MCF 10A (cell line): ENCODE measurements at regions of chr13 and their contacts with region 1.

Region 1: GRCh38 chr13:104571161-104571892 is 1505.1 kb upstream of the SLC10A2 start:
- DNase-seq: peak; percentile 80
- H3K4me3 Mint-ChIP-seq: peak overlapping the region; percentile 62
- H3K27ac Mint-ChIP-seq: peak overlapping the region; percentile 28
- H3K4me1 Mint-ChIP-seq: peaks cover 11% of the 10 kb centered on the region
- H3K27me3 Mint-ChIP-seq: no peaks in the 10 kb centered on the region
- CTCF ChIP-seq: peak; percentile 74

Region 2: GRCh38 chr13:103883164-103883563 is 688.2 kb before region 1 on chr13:
- CTCF ChIA-PET with region 1: interaction called, 7 read pairs
- POLR2A ChIA-PET with region 1: no interaction called
- intact Hi-C with region 1: loop called (anchors 2 kb)
- DNase-seq: peak; percentile 95
- H3K4me3 Mint-ChIP-seq: peak overlapping the region; percentile 57
- H3K27ac Mint-ChIP-seq: no peak overlapping the region
- H3K4me1 Mint-ChIP-seq: peaks cover 5% of the 10 kb centered on the region
- H3K27me3 Mint-ChIP-seq: no peaks in the 10 kb centered on the region
- CTCF ChIP-seq: peak; percentile 60

Region 3: DNA sequence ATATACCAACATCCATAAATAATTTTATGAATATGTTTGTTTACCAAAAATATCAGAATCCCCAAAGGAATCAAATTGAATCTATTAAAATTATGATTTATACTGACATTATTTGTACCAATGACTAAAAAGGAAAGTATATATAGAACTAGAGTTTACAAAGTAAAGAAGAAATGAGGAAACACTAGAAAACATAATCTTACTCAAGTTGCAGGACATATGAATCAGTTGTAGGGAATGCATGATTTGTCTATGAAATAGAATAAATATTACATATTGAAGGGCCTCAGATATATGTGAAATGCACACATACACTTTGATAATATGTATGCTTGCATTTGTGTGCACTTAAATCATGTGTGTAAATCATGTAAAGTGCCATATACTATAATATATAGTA is 497.8 kb after region 1 on chr13:
- CTCF ChIA-PET with region 1: no interaction called
- POLR2A ChIA-PET with region 1: no interaction called
- intact Hi-C with region 1: loop called (anchors 5 kb)
- DNase-seq: no peak
- H3K4me3 Mint-ChIP-seq: no peak overlapping the region
- H3K27ac Mint-ChIP-seq: no peak overlapping the region
- H3K4me1 Mint-ChIP-seq: peaks cover 6% of the 10 kb centered on the region
- H3K27me3 Mint-ChIP-seq: no peaks in the 10 kb centered on the region
- CTCF ChIP-seq: no peak

Region 4: GRCh38 chr13:106083620-106084350 is 1512.5 kb after region 1 on chr13:
- CTCF ChIA-PET with region 1: interaction called, 3 read pairs
- POLR2A ChIA-PET with region 1: no interaction called
- intact Hi-C with region 1: loop called (anchors 5 kb)
- DNase-seq: peak; percentile 84
- H3K4me3 Mint-ChIP-seq: no peak overlapping the region
- H3K27ac Mint-ChIP-seq: no peak overlapping the region
- H3K4me1 Mint-ChIP-seq: peaks cover 22% of the 10 kb centered on the region
- H3K27me3 Mint-ChIP-seq: no peaks in the 10 kb centered on the region
- CTCF ChIP-seq: peak; percentile 73